Activated CD4-positive, alpha-beta memory T cell treated with anti-CD3 and anti-CD28 coated beads for 36 hours (primary cell): ENCODE measurements at regions of chr14 and their contacts with region 1.

Region 1: GRCh38 chr14:81990312-81990761 is 456.7 kb upstream of the SEL1L start:
- DNase-seq: peak; percentile 39
- H3K4me3 Mint-ChIP-seq: no peak overlapping the region
- H3K27ac Mint-ChIP-seq: no peak overlapping the region
- H3K4me1 Mint-ChIP-seq: no peaks in the 10 kb centered on the region
- H3K27me3 Mint-ChIP-seq: peaks cover 2% of the 10 kb centered on the region

Region 2: GRCh38 chr14:81565441-81566290 is 424.7 kb before region 1 on chr14:
- CTCF ChIA-PET with region 1: interaction called, 3 read pairs
- POLR2A ChIA-PET with region 1: no interaction called
- intact Hi-C with region 1: loop called (anchors 5 kb)
- DNase-seq: peak; percentile 29
- H3K4me3 Mint-ChIP-seq: no peak overlapping the region
- H3K27ac Mint-ChIP-seq: no peak overlapping the region
- H3K4me1 Mint-ChIP-seq: no peaks in the 10 kb centered on the region
- H3K27me3 Mint-ChIP-seq: peaks cover 6% of the 10 kb centered on the region

Region 3: DNA sequence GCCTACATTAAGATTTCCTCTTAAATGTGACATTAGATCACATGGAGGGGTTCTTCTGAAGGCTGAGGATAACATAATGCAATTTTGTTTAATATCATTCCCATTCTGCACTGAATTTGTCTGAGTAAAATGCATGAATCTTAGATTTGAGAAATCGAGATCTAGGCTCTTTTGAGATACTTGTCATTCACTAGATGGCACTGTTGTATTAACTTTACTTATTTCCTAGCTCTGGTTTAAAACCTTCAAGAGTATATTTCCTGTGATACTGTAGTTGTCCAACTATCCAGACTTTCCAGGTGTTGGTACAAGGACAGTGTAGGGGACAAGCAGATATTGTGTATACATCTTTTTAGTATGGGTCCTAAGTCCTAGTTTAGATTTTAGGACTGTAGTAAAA is 365.0 kb before region 1 on chr14:
- CTCF ChIA-PET with region 1: no interaction called
- POLR2A ChIA-PET with region 1: no interaction called
- intact Hi-C with region 1: loop called (anchors 10 kb)
- DNase-seq: no peak
- H3K4me3 Mint-ChIP-seq: no peak overlapping the region
- H3K27ac Mint-ChIP-seq: no peak overlapping the region
- H3K4me1 Mint-ChIP-seq: no peaks in the 10 kb centered on the region
- H3K27me3 Mint-ChIP-seq: no peaks in the 10 kb centered on the region

Region 4: DNA sequence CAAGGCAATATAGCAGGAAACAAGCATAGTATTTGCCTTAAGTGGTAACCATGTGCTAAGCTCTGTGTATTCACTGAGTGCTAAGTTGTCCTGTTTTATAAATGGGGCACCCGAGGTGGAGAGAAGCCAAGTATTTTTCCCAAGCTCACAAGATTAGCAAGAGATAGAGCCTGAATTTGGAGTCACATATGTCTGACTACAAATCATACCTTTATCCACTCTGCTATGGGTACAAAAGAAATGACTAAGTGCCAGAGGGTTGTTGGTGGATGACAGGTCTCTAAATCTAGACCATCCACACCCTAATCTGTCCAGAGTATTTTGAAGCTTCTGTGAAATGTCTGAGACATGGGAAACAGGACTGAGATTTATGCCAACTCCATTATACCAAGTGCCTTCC is 274.6 kb before region 1 on chr14:
- CTCF ChIA-PET with region 1: no interaction called
- POLR2A ChIA-PET with region 1: no interaction called
- intact Hi-C with region 1: no loop called
- DNase-seq: no peak
- H3K4me3 Mint-ChIP-seq: no peak overlapping the region
- H3K27ac Mint-ChIP-seq: no peak overlapping the region
- H3K4me1 Mint-ChIP-seq: no peaks in the 10 kb centered on the region
- H3K27me3 Mint-ChIP-seq: no peaks in the 10 kb centered on the region

Region 5: DNA sequence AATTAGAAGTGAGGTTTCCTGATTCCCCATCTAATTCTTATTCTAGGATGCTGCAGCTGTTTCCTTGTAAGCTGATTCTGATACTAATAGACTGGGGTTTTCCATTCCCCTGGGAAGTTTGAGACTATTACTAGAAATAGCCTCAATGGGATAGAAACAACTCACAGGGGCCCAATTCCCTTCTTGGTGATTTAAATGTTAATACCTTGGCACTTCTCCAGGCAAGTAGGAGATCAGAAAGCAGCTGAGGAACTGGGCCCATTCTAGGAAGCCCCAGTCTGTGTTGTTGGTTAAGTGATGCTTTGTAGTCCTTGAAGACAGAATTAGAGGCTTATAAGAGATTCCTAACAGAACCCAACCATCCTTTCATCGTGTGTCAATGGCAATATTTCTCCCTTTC is 49.7 kb before region 1 on chr14:
- CTCF ChIA-PET with region 1: no interaction called
- POLR2A ChIA-PET with region 1: no interaction called
- intact Hi-C with region 1: no loop called
- DNase-seq: no peak
- H3K4me3 Mint-ChIP-seq: no peak overlapping the region
- H3K27ac Mint-ChIP-seq: no peak overlapping the region
- H3K4me1 Mint-ChIP-seq: no peaks in the 10 kb centered on the region
- H3K27me3 Mint-ChIP-seq: no peaks in the 10 kb centered on the region